Adrenal gland (tissue), 19 donors: ENCODE measurements at regions of chr15 and their contacts with region 1.

Region 1: DNA sequence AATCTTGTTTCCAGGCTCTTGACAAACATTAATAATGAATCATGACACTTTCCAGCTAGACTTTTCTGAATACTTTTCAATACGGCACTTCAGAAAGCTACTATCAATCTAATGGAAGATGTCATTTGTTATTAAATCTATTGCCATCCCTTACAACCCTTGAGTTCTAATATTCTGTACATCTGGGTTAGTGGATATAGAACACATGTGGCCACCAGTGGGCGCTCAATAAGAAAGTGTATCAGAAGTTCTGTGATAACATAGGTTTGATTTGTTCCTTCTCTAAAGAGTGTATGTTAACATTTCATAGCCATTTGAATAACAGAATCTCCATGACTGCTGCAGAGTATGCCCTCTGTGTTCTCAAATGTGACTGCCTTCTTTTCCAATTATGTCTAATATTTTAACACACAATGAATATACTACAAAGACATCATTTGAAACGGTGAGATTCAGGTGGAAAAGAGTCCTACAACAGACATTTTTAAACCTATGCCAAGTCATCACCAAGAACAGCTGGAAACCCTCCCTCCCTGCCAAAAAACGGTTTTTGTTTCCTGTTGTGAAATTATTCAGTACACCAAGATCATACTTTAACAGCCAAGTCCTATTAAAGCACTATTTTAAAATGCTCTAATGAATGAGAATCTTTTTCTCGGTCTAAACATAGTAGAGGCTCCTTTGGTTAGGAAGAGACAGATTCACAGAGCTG is 22.2 kb downstream of the ALDH1A2 start:
- DNase-seq: peak; percentile 29 to 77 (median 61)
- H3K4me3 ChIP-seq: no peak overlapping the region
- H3K27ac ChIP-seq: no peak overlapping the region
- H3K4me1 ChIP-seq: no peaks in the 10 kb centered on the region
- H3K27me3 ChIP-seq: no peaks in the 10 kb centered on the region
- CTCF ChIP-seq: peak; percentile 41 to 69 (median 57)
- POLR2A ChIP-seq: no peak

Region 2: GRCh38 chr15:57969354-57969753 is 74.0 kb before region 1 on chr15:
- intact Hi-C with region 1: no loop called
- DNase-seq: no peak
- H3K4me3 ChIP-seq: no peak overlapping the region
- H3K27ac ChIP-seq: no peak overlapping the region
- H3K4me1 ChIP-seq: no peaks in the 10 kb centered on the region
- H3K27me3 ChIP-seq: no peaks in the 10 kb centered on the region
- CTCF ChIP-seq: no peak
- POLR2A ChIP-seq: no peak

Region 3: DNA sequence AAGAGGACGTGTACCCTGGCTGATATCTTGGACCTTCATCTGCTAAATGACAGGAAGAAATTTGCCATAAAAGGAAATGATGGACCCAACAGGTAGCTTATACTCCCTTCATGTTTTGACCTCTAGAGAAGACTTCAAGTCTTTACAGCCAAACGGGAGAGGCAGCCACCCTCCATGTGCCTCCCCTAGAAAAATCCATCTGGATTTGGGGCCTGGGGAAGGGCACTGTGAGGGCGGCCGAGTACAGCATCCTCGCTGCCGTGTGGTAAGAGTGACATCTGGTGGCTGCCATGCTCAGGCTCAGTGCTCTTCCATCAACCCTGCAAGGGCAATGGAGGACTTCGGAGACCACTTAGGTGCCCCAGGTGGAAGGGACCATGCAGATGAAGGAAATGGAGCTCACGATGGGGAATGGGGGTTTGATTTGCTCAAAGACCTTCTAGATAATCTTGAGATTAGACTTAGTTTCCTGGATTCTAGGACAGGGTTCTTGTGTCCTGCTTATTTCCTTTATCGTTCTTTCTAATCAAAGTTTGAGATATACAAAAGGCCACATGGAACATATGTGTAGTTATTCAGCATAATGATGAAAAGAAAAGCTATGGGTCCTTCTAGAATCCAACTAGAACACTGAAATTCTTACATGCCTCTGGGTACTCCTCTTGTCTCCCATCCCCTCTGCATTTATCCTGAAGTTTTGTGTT is 139.3 kb after region 1 on chr15:
- intact Hi-C with region 1: loop called in 1 of 2 experiments (anchors 10 kb)
- DNase-seq: peak in 6 of 7 donors; percentile 20 to 56 (median 44)
- H3K4me3 ChIP-seq: no peak overlapping the region
- H3K27ac ChIP-seq: no peak overlapping the region
- H3K4me1 ChIP-seq: no peaks in the 10 kb centered on the region
- H3K27me3 ChIP-seq: no peaks in the 10 kb centered on the region
- CTCF ChIP-seq: peak; percentile 39 to 85 (median 73)
- POLR2A ChIP-seq: no peak

Region 4: GRCh38 chr15:58933281-58934113 is 890.1 kb after region 1 on chr15 and contains the start of gene SLTM:
- intact Hi-C with region 1: loop called in 1 of 2 experiments (anchors 10 kb)
- DNase-seq: peak; percentile 92 to 96 (median 94)
- H3K4me3 ChIP-seq: peak within 1 kb of the TSS; percentile 63 to 80 (median 76)
- H3K27ac ChIP-seq: peak within 1 kb of the TSS; percentile 73 to 100 (median 98)
- H3K4me1 ChIP-seq: peaks cover 18 to 26% of the 10 kb centered on the region in 2 donors
- H3K27me3 ChIP-seq: no peaks in the 10 kb centered on the region
- CTCF ChIP-seq: peak in 5 of 6 experiments; percentile 7 to 46 (median 37)
- POLR2A ChIP-seq: peak; percentile 97 to 98
- total RNA-seq, gene SLTM: 31.4 to 80.5 (median 48.9) TPM